ENCODE measurements at regions of chr5 and their contacts with region 1.

Region 1: GRCh38 chr5:168311061-168311566 is 19.7 kb downstream of the WWC1 start:
- DNase-seq: no peak
- H3K4me3 ChIP-seq: no peak overlapping the region
- H3K27ac ChIP-seq: no peak overlapping the region
- H3K4me1 ChIP-seq: peaks cover 0 to 10% (median 4%) of the 10 kb centered on the region in 4 experiments; a peak in 3 of 7 replicates
- H3K27me3 ChIP-seq: peaks cover 0 to 14% (median 6%) of the 10 kb centered on the region in 4 experiments; a peak in 5 of 7 replicates
- CTCF ChIP-seq: peak; percentile 20 to 50 (median 48); a peak in 3 of 4 replicates
- EP300 ChIP-seq: no peak
- POLR2A ChIP-seq: no peak
- RAD21 ChIP-seq: peak; percentile 32 to 47; a peak in 3 of 4 replicates

Region 2: DNA sequence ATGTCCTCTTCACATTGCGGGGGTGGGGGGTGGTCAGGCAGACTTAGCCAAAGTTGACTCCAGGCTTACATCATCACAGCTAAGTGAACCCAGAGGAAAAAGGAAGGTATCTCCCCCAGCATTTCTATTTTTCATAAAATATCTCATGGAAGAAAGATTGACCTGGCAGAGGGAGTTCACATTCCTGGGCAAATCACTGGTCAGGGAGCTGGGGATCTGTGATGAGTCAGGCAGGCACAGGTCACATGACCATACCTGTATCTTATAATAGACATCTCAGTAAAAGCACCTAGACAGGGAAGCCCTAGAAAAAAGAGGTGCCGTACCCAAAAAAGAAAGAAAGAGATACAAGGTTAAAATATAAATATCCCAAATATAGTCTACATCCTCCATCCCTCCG is 77.0 kb before region 1 on chr5:
- CTCF ChIA-PET with region 1: no interaction called
- POLR2A ChIA-PET with region 1: no interaction called
- DNase-seq: no peak
- H3K4me3 ChIP-seq: no peak overlapping the region
- H3K27ac ChIP-seq: no peak overlapping the region
- H3K4me1 ChIP-seq: no peaks in the 10 kb centered on the region; a peak in 1 of 7 replicates
- H3K27me3 ChIP-seq: no peaks in the 10 kb centered on the region; a peak in 1 of 7 replicates
- CTCF ChIP-seq: no peak
- EP300 ChIP-seq: no peak
- POLR2A ChIP-seq: no peak
- RAD21 ChIP-seq: no peak

Region 3: DNA sequence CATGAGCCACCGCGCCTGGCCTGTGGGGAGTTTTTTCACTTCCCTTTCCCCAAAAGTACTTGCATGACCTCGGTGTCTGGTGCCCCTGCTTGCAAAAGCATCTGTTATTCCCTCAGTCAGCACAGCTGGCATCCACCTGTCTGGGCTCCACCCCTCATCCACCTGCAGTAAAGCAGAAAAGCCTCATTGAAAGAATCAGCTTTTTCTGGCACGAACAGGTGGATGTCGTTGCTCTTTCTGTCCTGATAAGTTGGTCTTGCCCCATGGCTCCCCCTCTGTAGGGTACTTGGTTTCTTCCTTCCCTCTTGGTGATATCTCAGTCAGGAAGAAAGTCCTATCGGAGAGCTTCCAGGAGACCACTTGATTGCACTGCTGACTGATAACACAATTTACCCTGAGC is 17.7 kb after region 1 on chr5:
- CTCF ChIA-PET with region 1: interaction called, 11 read pairs
- POLR2A ChIA-PET with region 1: interaction called, 5 read pairs
- DNase-seq: peak in 1 of 2 experiments; percentile 69
- H3K4me3 ChIP-seq: peak overlapping the region in 1 of 4 experiments; percentile 38; a peak in 2 of 8 replicates
- H3K27ac ChIP-seq: no peak overlapping the region
- H3K4me1 ChIP-seq: peaks cover 21 to 36% (median 26%) of the 10 kb centered on the region in 4 experiments
- H3K27me3 ChIP-seq: no peaks in the 10 kb centered on the region
- CTCF ChIP-seq: no peak
- EP300 ChIP-seq: peak in 1 of 2 experiments; percentile 95; a peak in 2 of 3 replicates
- POLR2A ChIP-seq: no peak
- RAD21 ChIP-seq: no peak

Region 4: GRCh38 chr5:169344629-169345028 is 1033.5 kb after region 1 on chr5:
- CTCF ChIA-PET with region 1: no interaction called
- POLR2A ChIA-PET with region 1: no interaction called
- DNase-seq: no peak
- H3K4me3 ChIP-seq: no peak overlapping the region
- H3K27ac ChIP-seq: no peak overlapping the region
- H3K4me1 ChIP-seq: peaks cover 0 to 2% (median 0%) of the 10 kb centered on the region in 4 experiments; a peak in 1 of 7 replicates
- H3K27me3 ChIP-seq: no peaks in the 10 kb centered on the region
- CTCF ChIP-seq: no peak
- EP300 ChIP-seq: no peak
- POLR2A ChIP-seq: no peak
- RAD21 ChIP-seq: no peak